GM12878 (cell line): ENCODE measurements at regions of chr13 and their contacts with region 1.

Region 1: GRCh38 chr13:45393941-45394570 is 24.1 kb downstream of the SLC25A30 start:
- DNase-seq: no peak
- ATAC-seq: peak; percentile 87
- H3K4me3 ChIP-seq: no peak overlapping the region
- H3K27ac ChIP-seq: no peak overlapping the region
- H3K4me1 ChIP-seq: peaks cover 10% of the 10 kb centered on the region
- H3K27me3 ChIP-seq: no peaks in the 10 kb centered on the region
- CTCF ChIP-seq: peak; percentile 44 to 70 (median 68); a peak in 5 of 6 replicates
- EP300 ChIP-seq: no peak
- POLR2A ChIP-seq: no peak
- RAD21 ChIP-seq: peak; percentile 50

Region 2: GRCh38 chr13:45325806-45326205 is 68.2 kb before region 1 on chr13:
- CTCF ChIA-PET with region 1: no interaction called
- POLR2A ChIA-PET with region 1: no interaction called
- RAD21 ChIA-PET with region 1: no interaction called
- SMC1A ChIA-PET with region 1: no interaction called
- in situ Hi-C with region 1: no loop called
- intact Hi-C with region 1: no loop called
- DNase-seq: no peak
- ATAC-seq: no peak
- H3K4me3 ChIP-seq: no peak overlapping the region
- H3K27ac ChIP-seq: no peak overlapping the region
- H3K4me1 ChIP-seq: 0 out of 2 replicates have a peak, but pooled peaks cover 5% of the 10 kb centered on the region
- H3K27me3 ChIP-seq: no peaks in the 10 kb centered on the region
- CTCF ChIP-seq: no peak
- EP300 ChIP-seq: no peak
- POLR2A ChIP-seq: no peak
- RAD21 ChIP-seq: no peak

Region 3: DNA sequence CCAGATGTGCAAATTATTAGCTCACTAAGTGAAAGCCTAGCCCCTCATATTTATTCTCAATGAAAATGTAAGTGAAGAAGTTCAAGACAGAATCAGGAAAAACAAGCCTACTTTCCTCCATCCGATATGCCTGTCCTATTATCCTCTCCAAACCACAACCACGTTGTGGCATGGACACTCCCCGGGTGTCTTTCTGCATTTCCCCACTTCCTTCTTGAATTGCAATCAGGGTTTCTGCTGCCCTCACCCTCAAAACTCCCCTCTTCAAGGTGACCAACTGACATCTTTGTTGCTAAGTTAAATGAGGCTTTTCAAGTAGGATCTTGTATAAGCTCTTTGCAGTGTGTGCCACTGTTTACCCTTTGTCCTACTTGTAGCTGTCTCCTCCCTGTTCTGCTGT is 12.4 kb after region 1 on chr13:
- CTCF ChIA-PET with region 1: interaction called, 26 read pairs
- POLR2A ChIA-PET with region 1: interaction called, 3 read pairs
- RAD21 ChIA-PET with region 1: no interaction called
- SMC1A ChIA-PET with region 1: interaction called, 6 read pairs
- in situ Hi-C with region 1: no loop called
- intact Hi-C with region 1: no loop called
- DNase-seq: no peak
- ATAC-seq: no peak
- H3K4me3 ChIP-seq: no peak overlapping the region
- H3K27ac ChIP-seq: no peak overlapping the region
- H3K4me1 ChIP-seq: no peaks in the 10 kb centered on the region
- H3K27me3 ChIP-seq: no peaks in the 10 kb centered on the region
- CTCF ChIP-seq: no peak
- EP300 ChIP-seq: no peak
- POLR2A ChIP-seq: no peak
- RAD21 ChIP-seq: no peak

Region 4: GRCh38 chr13:45412274-45413049 is 18.4 kb after region 1 on chr13:
- CTCF ChIA-PET with region 1: interaction called, 17 read pairs
- POLR2A ChIA-PET with region 1: no interaction called
- RAD21 ChIA-PET with region 1: interaction called, 5 read pairs
- SMC1A ChIA-PET with region 1: interaction called, 17 read pairs
- in situ Hi-C with region 1: no loop called
- intact Hi-C with region 1: no loop called
- DNase-seq: no peak
- ATAC-seq: peak; percentile 23; the same call in 2 of the 3 replicates
- H3K4me3 ChIP-seq: no peak overlapping the region
- H3K27ac ChIP-seq: no peak overlapping the region
- H3K4me1 ChIP-seq: no peaks in the 10 kb centered on the region
- H3K27me3 ChIP-seq: no peaks in the 10 kb centered on the region
- CTCF ChIP-seq: no peak
- EP300 ChIP-seq: no peak
- POLR2A ChIP-seq: no peak
- RAD21 ChIP-seq: no peak

Region 5: DNA sequence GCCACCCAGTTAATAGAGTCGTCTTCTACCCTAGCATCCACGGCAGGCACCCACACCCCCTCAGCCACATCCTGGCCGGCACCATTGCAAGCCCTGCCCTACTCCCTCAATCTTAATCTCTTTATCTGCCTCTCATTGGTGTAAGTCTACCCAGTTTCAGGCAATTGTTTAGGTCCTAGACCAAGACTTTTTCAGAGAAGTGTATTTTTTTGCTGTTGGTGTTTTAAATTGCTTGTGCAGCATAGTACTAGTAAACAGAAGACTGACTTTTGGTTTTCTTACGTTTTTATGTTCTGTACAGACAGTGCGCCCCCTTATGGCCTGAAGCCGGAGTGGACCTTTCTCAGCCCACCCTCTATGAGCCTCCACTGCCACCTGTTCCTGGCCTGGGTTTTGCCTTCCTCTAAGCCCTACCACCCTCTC is 790.2 kb after region 1 on chr13:
- CTCF ChIA-PET with region 1: no interaction called
- POLR2A ChIA-PET with region 1: no interaction called
- RAD21 ChIA-PET with region 1: no interaction called
- SMC1A ChIA-PET with region 1: no interaction called
- in situ Hi-C with region 1: no loop called
- intact Hi-C with region 1: no loop called
- DNase-seq: no peak
- ATAC-seq: peak; percentile 65
- H3K4me3 ChIP-seq: peak overlapping the region; percentile 68; the same call in 1 of the 2 replicates
- H3K27ac ChIP-seq: peak overlapping the region; percentile 99
- H3K4me1 ChIP-seq: peaks cover 7% of the 10 kb centered on the region
- H3K27me3 ChIP-seq: no peaks in the 10 kb centered on the region
- CTCF ChIP-seq: peak; percentile 89 to 90 (median 90)
- EP300 ChIP-seq: no peak
- POLR2A ChIP-seq: no peak
- RAD21 ChIP-seq: peak; percentile 69